ENCODE measurements at regions of chr16 and their contacts with region 1.

Region 1: DNA sequence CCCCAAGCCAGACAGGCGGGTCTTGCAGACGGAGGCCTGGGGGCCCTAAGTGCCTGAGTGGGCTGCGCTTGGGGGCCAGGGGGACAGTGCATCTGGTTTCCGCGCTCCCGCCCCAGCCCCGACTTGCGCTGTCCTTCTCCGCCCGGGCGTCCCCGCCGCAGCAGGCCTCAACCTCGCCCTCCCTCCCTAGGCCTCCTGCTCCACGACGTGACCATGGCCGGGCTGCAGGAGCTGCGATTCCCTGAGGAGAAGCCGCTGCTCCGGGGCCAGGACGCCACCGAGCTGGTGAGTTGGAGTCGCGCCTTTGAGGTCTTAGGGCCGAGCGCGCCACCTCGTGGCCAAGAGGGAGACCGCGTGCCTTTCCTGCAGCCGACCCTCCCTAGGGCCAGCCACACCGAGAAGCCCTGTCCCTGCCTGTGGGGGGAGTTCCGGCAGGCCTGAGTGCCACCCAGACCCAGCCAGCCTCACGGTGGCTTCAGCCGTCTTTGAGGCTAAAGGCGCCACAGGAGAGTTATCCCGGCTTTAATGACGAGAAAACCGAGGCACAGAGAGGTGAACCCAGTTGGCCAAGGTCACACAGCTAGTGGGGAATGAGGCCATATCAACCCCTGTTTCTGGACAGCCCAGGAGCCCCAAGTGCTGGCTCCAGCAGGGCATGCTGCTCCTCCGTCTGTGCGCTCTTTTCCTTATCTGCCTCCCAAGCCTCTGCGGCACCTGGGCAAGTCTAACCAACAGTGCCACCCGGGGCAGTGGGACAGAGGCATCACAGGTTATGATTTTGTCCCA is 12.2 kb upstream of the NDRG4 start:
- DNase-seq: no peak
- H3K4me3 ChIP-seq: peak overlapping the region; percentile 15 to 28
- H3K27ac ChIP-seq: no peak overlapping the region
- H3K4me1 ChIP-seq: peaks cover 6% of the 10 kb centered on the region
- H3K27me3 ChIP-seq: no peaks in the 10 kb centered on the region
- CTCF ChIP-seq: peak; percentile 85 to 92 (median 87)
- POLR2A ChIP-seq: no peak

Region 2: DNA sequence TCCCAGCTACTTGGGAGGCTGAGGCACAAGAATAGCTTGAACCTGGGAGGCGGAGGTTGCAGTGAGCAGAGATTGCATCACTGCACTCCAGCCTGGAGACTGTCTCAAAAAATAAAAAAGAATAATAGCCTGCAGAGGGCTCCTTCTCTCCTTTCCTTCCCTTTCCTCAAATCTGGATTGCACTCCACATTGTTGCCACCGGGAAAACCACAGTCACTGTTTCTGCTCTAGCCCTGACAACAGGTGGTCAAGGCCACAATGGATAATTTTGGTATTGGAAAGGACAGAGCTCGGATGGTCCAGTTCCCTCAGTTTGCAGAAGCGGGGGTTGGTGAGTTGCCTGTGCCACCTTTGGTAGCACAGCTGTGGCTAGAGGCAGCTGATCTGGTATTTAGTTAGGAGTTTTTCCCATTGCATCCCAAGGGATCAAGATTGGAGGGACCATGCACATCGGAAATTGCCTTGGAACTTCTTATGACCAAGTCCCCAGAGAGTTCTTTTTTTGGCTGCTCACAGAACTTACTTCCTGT is 148.2 kb before region 1 on chr16:
- intact Hi-C with region 1: loop called (anchors 2 kb)
- DNase-seq: no peak
- H3K4me3 ChIP-seq: no peak overlapping the region
- H3K27ac ChIP-seq: no peak overlapping the region
- H3K4me1 ChIP-seq: peaks cover 5% of the 10 kb centered on the region
- H3K27me3 ChIP-seq: no peaks in the 10 kb centered on the region
- CTCF ChIP-seq: no peak
- POLR2A ChIP-seq: no peak

Region 3: DNA sequence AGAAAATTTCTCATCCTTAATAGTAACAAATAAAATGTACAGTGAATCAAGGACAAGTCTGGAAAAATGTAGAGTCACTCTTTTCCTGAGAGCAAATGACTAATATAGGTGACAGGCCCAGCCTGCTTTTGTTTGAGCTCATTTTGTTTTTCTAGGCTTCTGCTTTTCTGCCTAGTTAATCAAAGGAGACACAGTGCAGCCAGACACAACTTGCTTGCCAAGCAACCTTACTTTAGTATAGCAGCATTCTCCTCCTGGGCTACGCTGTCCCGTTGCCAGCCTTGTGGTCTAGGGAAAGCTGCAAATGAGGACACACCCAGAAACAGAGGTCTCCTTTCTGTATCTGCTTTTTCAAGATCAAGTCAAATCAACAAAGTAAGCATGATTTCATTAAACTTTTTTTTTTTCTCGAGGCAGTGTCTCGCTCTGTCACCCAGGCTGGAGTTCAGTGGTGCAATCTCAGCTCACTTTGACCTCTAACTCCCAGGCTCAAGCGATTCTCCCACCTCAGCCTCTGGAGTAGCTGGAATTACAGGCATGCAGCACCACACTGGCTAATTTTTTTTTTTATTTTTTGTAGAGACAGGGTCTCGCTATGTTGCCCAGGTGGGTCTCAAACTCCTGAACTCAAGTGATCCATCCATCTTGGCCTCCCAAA is 78.3 kb before region 1 on chr16:
- intact Hi-C with region 1: no loop called
- DNase-seq: no peak
- H3K4me3 ChIP-seq: no peak overlapping the region
- H3K27ac ChIP-seq: no peak overlapping the region
- H3K4me1 ChIP-seq: peaks cover 4% of the 10 kb centered on the region
- H3K27me3 ChIP-seq: no peaks in the 10 kb centered on the region
- CTCF ChIP-seq: no peak
- POLR2A ChIP-seq: no peak

Region 4: DNA sequence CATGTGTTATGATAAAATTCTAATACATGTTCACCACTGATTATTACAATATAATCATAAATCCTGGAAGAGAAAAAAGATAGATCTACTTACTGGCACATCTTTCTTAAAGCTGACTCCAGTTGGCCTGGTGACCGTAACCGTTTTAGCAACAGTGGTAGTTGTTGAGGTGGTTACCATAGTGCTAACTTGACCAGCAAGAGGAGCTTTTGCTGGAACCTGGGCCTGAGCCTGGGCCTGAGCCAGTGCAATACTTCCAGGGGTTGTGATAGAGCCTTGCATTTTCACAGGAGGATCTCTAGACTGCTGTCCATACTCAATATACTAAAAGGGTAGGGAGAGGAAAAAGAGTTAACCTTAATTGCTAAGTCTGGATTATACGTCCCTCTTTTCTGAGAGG is 63.7 kb after region 1 on chr16:
- intact Hi-C with region 1: no loop called
- DNase-seq: no peak
- H3K4me3 ChIP-seq: no peak overlapping the region
- H3K27ac ChIP-seq: no peak overlapping the region
- H3K4me1 ChIP-seq: no peaks in the 10 kb centered on the region
- H3K27me3 ChIP-seq: no peaks in the 10 kb centered on the region
- CTCF ChIP-seq: no peak
- POLR2A ChIP-seq: no peak